CD14-positive monocyte (primary cell): ENCODE measurements at regions of chr2 and their contacts with region 1.

Region 1: DNA sequence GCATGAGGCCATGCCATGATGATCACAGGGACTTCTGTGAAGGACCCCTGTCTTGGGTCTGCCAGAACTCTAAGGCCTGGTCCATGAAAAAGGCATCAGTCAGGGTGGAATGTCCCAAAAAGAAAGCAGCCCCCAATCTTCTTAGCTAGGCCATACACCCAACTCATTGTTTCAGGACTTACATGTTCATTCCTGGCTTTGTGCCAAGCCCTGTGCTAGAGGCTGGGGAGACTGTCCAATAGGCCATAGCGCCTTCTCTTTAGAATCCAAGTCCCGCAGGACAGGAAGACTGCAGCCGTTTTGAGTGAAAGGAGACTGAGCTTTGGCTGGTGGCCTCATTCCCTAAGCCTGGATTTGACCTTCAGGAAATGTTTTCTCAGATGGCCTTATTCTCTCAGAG is 247.3 kb downstream of the PRKCE start:
- DNase-seq: no peak
- H3K4me3 ChIP-seq: no peak overlapping the region
- H3K4me3 Mint-ChIP-seq: no peak overlapping the region
- H3K27ac ChIP-seq: peak overlapping the region in 1 of 2 donors; percentile 79
- H3K27ac Mint-ChIP-seq: peak overlapping the region in 5 of 7 donors; percentile 76 to 91 (median 88)
- H3K4me1 ChIP-seq: peaks cover 44 to 48% of the 10 kb centered on the region in 2 donors
- H3K4me1 Mint-ChIP-seq: peaks cover 52% of the 10 kb centered on the region
- H3K27me3 ChIP-seq: no peaks in the 10 kb centered on the region
- H3K27me3 Mint-ChIP-seq: no peaks in the 10 kb centered on the region
- CTCF ChIP-seq: no peak

Region 2: DNA sequence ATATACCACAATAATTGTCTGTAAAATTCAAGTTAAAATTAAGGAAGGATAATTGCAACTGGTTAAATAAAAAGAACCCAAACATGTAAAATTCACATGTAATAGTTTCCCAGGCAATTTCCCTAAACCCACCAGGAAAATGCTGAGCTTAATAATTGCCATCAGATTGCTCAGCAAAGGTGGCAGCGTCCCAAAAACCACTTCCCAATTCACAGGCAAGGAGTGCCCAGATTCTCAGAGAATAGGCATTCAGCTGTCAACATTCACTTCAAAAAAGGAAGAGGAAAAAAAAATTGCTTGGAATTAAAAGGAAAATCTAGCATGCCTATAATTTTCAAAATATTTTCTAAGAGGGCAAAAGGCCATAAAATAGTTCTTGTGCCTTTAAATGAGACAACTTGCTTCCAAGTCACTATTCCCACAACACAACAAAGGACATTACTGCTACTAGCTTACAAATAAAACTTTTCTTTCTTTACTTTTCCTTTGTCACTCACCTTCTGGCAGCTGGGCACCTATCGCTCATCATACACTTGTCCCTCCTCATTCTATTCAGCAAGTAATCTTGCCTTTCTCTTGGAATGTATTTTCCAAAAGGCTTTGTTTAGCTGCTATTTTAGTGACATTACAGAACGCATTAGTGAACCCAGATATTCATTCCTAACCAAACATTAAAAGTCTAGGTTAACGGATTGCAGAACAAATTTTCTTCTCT is 302.9 kb before region 1 on chr2:
- intact Hi-C with region 1: no loop called
- DNase-seq: no peak
- H3K4me3 ChIP-seq: no peak overlapping the region
- H3K4me3 Mint-ChIP-seq: no peak overlapping the region
- H3K27ac ChIP-seq: no peak overlapping the region
- H3K27ac Mint-ChIP-seq: peak overlapping the region in 2 of 7 donors; percentile 9 to 10
- H3K4me1 ChIP-seq: no peaks in the 10 kb centered on the region
- H3K4me1 Mint-ChIP-seq: peaks cover 11% of the 10 kb centered on the region
- H3K27me3 ChIP-seq: no peaks in the 10 kb centered on the region
- H3K27me3 Mint-ChIP-seq: peaks cover 0 to 2% (median 0%) of the 10 kb centered on the region in 3 donors
- CTCF ChIP-seq: no peak

Region 3: GRCh38 chr2:45930396-45930792 is 31.6 kb after region 1 on chr2:
- intact Hi-C with region 1: loop called in 1 of 2 experiments (anchors 5 kb)
- DNase-seq: no peak
- H3K4me3 ChIP-seq: no peak overlapping the region
- H3K4me3 Mint-ChIP-seq: no peak overlapping the region
- H3K27ac ChIP-seq: peak overlapping the region; percentile 19 to 69
- H3K27ac Mint-ChIP-seq: peak overlapping the region in 4 of 7 donors; percentile 18 to 82 (median 69)
- H3K4me1 ChIP-seq: peaks cover 12 to 14% of the 10 kb centered on the region in 2 donors
- H3K4me1 Mint-ChIP-seq: peaks cover 16% of the 10 kb centered on the region
- H3K27me3 ChIP-seq: no peaks in the 10 kb centered on the region
- H3K27me3 Mint-ChIP-seq: no peaks in the 10 kb centered on the region
- CTCF ChIP-seq: no peak